ENCODE measurements at regions of chr10 and their contacts with region 1.

Region 1: GRCh38 chr10:71812016-71812912 is 38.8 kb downstream of the PSAP start:
- DNase-seq: peak; percentile 31 to 71
- H3K4me3 ChIP-seq: no peak overlapping the region
- H3K27ac ChIP-seq: no peak overlapping the region
- H3K4me1 ChIP-seq: no peaks in the 10 kb centered on the region
- H3K27me3 ChIP-seq: no peaks in the 10 kb centered on the region
- CTCF ChIP-seq: peak; percentile 90

Region 2: GRCh38 chr10:71222601-71223346 is 589.5 kb before region 1 on chr10:
- CTCF ChIA-PET with region 1: no interaction called
- POLR2A ChIA-PET with region 1: interaction called, 12 read pairs
- intact Hi-C with region 1: no loop called
- DNase-seq: no peak
- H3K4me3 ChIP-seq: no peak overlapping the region
- H3K27ac ChIP-seq: no peak overlapping the region
- H3K4me1 ChIP-seq: peaks cover 10% of the 10 kb centered on the region
- H3K27me3 ChIP-seq: no peaks in the 10 kb centered on the region
- CTCF ChIP-seq: no peak

Region 3: DNA sequence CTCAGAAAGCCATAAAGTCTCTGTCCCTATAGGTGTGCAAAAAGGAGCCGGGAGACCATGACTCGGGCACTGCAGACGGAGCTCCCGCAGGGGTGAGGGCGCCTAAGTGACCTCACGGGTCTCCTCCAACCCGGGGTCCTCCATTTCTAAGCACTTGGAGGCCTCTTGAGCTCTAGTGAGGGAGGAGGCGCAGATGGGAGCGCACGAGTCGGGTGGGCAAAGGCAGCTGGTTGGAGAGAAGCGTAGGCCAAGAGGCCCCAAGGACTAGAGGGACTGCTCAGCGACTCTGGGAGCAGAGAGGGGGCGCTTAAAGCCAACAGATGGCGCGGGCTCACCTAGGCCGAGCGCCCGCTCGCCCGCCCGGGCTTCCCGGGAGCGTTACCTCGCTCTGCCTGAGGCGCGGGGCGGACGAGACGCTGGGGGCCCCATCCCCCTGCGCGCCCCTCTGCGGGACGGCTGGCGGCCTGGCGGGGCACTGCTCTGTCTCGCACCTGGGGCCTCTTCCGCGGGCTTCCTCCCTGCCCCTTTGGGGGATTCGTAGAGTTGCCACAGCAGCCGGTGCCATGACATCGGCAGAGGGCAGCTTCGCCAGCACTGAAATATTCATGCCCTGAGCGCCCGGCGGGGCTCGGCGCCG is 416.1 kb before region 1 on chr10:
- CTCF ChIA-PET with region 1: no interaction called
- POLR2A ChIA-PET with region 1: no interaction called
- intact Hi-C with region 1: loop called (anchors 5 kb)
- DNase-seq: peak; percentile 49 to 70
- H3K4me3 ChIP-seq: peak overlapping the region; percentile 60
- H3K27ac ChIP-seq: no peak overlapping the region
- H3K4me1 ChIP-seq: peaks cover 41% of the 10 kb centered on the region
- H3K27me3 ChIP-seq: peaks cover 8% of the 10 kb centered on the region; the same call in 1 of the 2 replicates
- CTCF ChIP-seq: peak; percentile 57

Region 4: DNA sequence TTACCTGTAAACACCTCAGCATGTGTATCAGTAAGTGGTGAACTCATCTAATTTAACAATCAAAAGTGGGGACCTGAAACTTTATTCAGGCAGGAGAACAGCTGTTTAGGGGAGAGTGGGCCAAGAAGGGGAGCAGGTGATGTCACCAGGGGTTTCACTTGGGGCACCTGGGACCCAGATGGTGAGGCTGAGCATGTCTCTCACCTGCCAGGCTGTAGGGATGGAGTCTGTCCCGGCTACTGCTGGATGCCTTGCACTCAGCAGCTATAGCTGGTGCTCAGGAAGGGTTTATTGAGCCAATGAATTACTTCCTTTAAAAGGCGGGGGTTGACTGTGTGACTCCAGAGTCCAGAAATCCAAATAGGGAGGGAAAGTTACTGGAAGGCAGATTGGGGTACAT is 392.5 kb before region 1 on chr10:
- CTCF ChIA-PET with region 1: no interaction called
- POLR2A ChIA-PET with region 1: no interaction called
- intact Hi-C with region 1: no loop called
- DNase-seq: no peak
- H3K4me3 ChIP-seq: no peak overlapping the region
- H3K27ac ChIP-seq: no peak overlapping the region
- H3K4me1 ChIP-seq: no peaks in the 10 kb centered on the region
- H3K27me3 ChIP-seq: no peaks in the 10 kb centered on the region
- CTCF ChIP-seq: no peak

Region 5: GRCh38 chr10:71620642-71621041 is 191.6 kb before region 1 on chr10:
- CTCF ChIA-PET with region 1: no interaction called
- POLR2A ChIA-PET with region 1: no interaction called
- intact Hi-C with region 1: no loop called
- DNase-seq: no peak
- H3K4me3 ChIP-seq: no peak overlapping the region
- H3K27ac ChIP-seq: no peak overlapping the region
- H3K4me1 ChIP-seq: peaks cover 31% of the 10 kb centered on the region
- H3K27me3 ChIP-seq: no peaks in the 10 kb centered on the region
- CTCF ChIP-seq: no peak

Region 6: DNA sequence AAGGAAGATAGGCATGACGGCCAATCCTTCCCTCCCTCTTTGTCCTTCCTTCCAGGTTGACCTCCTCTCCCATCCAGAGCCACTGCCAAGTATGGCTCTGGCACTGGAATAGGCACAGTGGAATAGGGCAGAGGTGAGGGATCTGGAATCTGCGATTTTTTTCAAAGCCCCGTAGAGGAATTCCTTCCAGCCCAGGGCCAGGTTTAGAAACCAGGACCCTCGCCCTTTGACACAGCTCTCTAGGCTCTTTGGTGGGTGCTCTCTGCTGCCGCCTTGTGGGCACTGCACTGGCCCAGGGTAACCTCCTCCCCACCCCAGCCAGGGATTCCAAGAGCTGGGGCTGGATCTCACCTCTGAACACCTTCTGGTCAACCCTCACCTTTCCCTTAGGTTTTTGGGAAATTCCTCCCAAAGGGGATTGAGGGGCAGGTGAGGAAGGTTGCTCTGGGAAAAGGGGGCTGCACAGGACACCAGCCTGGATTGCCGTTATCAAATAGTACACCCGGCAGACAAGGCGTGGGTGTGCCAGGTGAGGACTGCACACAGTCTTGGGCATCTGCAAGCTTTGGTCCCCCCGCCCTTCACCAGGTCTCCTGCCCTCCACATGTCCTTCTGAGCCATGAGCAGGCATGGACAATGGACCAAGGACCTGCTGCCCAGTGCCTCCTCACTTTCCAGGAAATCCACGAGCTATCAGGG is 115.5 kb before region 1 on chr10:
- CTCF ChIA-PET with region 1: interaction called, 15 read pairs
- POLR2A ChIA-PET with region 1: no interaction called
- intact Hi-C with region 1: no loop called
- DNase-seq: peak in 1 of 2 experiments; percentile 68
- H3K4me3 ChIP-seq: no peak overlapping the region
- H3K27ac ChIP-seq: no peak overlapping the region
- H3K4me1 ChIP-seq: peaks cover 27% of the 10 kb centered on the region
- H3K27me3 ChIP-seq: no peaks in the 10 kb centered on the region
- CTCF ChIP-seq: peak; percentile 98

Region 7: GRCh38 chr10:71713135-71714030 is 98.9 kb before region 1 on chr10:
- CTCF ChIA-PET with region 1: interaction called, 3 read pairs
- POLR2A ChIA-PET with region 1: no interaction called
- intact Hi-C with region 1: loop called (anchors 5 kb)
- DNase-seq: peak; percentile 66 to 77
- H3K4me3 ChIP-seq: no peak overlapping the region
- H3K27ac ChIP-seq: peak overlapping the region; percentile 50
- H3K4me1 ChIP-seq: peaks cover 20% of the 10 kb centered on the region
- H3K27me3 ChIP-seq: no peaks in the 10 kb centered on the region
- CTCF ChIP-seq: no peak; the same call in 1 of the 2 replicates

Region 8: GRCh38 chr10:71783943-71784678 is 28.2 kb before region 1 on chr10:
- CTCF ChIA-PET with region 1: interaction called, 19 read pairs
- POLR2A ChIA-PET with region 1: no interaction called
- intact Hi-C with region 1: no loop called
- DNase-seq: no peak
- H3K4me3 ChIP-seq: no peak overlapping the region
- H3K27ac ChIP-seq: no peak overlapping the region
- H3K4me1 ChIP-seq: no peaks in the 10 kb centered on the region
- H3K27me3 ChIP-seq: no peaks in the 10 kb centered on the region
- CTCF ChIP-seq: no peak